GM10248 (cell line): ENCODE measurements at regions of chr5 and their contacts with region 1.

Region 1: GRCh38 chr5:32585446-32586275 is at the start of gene SUB1:
- DNase-seq: peak; percentile 90
- CTCF ChIP-seq: no peak

Region 2: DNA sequence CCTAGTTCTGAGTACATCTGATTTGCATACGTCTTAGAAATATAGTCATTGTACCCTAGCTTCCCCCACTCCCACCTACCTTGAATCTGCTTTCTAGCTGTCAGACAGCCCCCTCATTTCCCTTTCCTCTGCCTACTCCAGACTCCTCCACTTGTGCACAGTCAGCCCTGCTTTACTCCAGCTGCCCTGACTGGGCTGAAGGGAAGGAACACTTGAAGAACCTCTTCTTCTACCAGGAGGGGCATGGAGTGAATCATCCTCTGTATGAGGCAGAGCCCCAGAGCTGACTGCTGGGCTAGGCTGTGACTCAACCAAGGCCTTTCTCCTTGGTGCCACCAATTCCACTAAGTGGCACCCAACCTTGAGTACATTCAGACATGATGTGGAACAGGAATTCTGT is 123.0 kb before region 1 on chr5:
- CTCF ChIA-PET with region 1: interaction called, 14 read pairs
- POLR2A ChIA-PET with region 1: interaction called, 3 read pairs
- DNase-seq: no peak
- CTCF ChIP-seq: no peak

Region 3: DNA sequence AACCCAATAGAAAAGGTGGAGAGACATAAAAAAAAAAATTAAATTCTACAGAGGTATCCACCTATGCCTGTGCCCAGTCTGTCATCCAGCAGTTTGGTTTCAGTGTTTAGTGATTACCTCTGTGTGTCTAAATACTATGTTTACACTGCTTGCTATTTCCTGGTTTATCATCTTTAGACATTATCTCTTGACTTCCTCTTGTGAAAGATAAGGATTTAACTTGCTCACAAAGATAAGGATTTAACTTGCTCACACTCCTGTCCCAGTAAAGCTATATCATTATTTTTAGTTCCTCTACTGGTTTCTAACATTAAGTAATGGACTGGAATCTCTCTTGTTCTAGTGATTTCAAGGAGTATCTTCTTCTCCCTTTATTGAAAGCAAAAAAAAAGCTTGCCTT is 87.2 kb before region 1 on chr5:
- CTCF ChIA-PET with region 1: interaction called, 39 read pairs
- POLR2A ChIA-PET with region 1: interaction called, 3 read pairs
- DNase-seq: no peak
- CTCF ChIP-seq: no peak

Region 4: GRCh38 chr5:32531885-32532520 is 53.7 kb before region 1 on chr5:
- CTCF ChIA-PET with region 1: interaction called, 27 read pairs
- POLR2A ChIA-PET with region 1: interaction called, 3 read pairs
- DNase-seq: peak; percentile 31
- CTCF ChIP-seq: no peak

Region 5: GRCh38 chr5:32574540-32575175 is 11.0 kb before region 1 on chr5:
- CTCF ChIA-PET with region 1: interaction called, 13 read pairs
- POLR2A ChIA-PET with region 1: no interaction called
- DNase-seq: no peak
- CTCF ChIP-seq: no peak